ENCODE measurements at regions of chr2 and their contacts with region 1.

Region 1: DNA sequence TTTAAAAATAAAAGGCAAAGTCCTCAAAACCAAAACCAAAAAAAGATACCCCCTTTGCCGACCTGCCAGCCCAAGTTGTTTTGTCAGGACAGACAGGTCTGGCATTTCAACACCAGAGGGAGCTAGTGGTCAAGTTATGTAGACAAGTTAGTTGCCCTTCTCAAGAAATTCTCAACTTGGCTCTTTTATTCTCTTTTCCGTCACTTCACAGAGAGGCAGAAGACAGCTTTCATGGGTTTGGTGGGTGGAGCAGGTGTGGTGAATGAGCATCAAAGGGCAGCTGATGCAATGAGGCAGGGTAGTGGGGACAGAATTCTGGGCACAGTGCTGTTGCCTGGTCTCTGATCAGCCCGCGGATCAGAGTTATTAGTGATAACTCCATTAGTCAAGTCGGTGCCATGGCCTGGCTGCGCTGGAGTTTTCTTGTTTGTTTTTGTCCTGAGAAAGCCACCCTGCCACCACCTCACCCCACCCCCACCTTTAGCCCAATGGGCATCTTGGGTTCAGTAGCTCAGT is 303.7 kb upstream of the EPAS1 start:
- DNase-seq: peak; percentile 69
- CTCF ChIP-seq: peak; percentile 71

Region 2: DNA sequence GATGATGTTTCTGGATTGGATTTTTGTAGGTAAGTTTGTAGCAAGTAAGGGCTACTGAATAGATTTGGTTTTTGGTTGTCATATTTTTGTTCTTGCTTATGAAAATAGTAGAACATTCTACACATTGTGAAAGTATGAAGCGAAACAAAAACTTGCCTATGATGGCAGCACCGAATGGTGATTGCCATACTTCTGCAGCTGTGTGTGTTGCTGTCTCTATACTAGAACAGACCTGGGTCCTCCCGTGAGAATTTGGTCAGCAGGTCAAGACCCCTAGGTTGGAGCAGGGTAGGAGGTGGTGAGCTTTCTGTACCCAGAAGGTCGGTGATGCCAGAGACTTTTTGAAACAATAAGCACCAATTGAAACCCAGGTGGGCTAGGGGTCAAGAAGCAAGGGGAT is 19.5 kb before region 1 on chr2:
- CTCF ChIA-PET with region 1: interaction called, 27 read pairs
- POLR2A ChIA-PET with region 1: no interaction called
- DNase-seq: peak; percentile 56
- CTCF ChIP-seq: no peak

Region 3: GRCh38 chr2:45980161-45980852 is 13.2 kb before region 1 on chr2:
- CTCF ChIA-PET with region 1: interaction called, 27 read pairs
- POLR2A ChIA-PET with region 1: no interaction called
- DNase-seq: no peak
- CTCF ChIP-seq: no peak

Region 4: DNA sequence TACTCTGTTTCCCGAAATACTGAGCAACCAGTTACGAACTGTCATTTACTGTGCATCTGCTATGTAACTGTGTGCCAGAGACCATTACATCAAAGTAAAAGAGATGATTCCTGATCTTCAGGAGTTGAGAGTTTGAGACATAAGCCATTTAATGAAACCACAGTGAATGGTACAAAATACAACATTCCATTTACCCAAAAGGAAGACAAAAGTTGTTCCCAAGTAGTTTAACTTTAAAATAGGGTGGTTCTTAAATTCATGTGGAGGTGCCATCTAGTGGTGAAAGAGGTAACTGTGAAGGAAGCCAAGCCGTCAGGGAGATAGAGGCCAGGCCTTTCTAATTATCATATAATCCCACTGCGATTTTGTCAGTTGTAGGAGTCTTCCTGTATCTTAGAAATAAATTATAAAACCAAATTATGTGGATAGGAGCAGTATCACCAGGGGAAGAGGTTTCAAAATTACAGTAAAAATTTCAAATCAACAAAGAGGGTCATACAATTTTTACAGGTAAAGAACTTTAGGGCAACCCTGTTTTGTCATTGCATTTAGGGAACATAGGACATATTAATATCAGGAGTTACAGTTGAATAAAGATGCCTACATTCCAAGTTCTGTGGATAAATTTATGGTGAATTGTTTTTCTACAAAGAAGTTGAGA is 371.4 kb after region 1 on chr2:
- CTCF ChIA-PET with region 1: interaction called, 15 read pairs
- POLR2A ChIA-PET with region 1: no interaction called
- DNase-seq: peak; percentile 70
- CTCF ChIP-seq: peak; percentile 70

Region 5: GRCh38 chr2:46461011-46461674 is 467.6 kb after region 1 on chr2:
- CTCF ChIA-PET with region 1: interaction called, 17 read pairs
- POLR2A ChIA-PET with region 1: no interaction called
- DNase-seq: peak; percentile 71
- CTCF ChIP-seq: peak; percentile 97

Region 6: DNA sequence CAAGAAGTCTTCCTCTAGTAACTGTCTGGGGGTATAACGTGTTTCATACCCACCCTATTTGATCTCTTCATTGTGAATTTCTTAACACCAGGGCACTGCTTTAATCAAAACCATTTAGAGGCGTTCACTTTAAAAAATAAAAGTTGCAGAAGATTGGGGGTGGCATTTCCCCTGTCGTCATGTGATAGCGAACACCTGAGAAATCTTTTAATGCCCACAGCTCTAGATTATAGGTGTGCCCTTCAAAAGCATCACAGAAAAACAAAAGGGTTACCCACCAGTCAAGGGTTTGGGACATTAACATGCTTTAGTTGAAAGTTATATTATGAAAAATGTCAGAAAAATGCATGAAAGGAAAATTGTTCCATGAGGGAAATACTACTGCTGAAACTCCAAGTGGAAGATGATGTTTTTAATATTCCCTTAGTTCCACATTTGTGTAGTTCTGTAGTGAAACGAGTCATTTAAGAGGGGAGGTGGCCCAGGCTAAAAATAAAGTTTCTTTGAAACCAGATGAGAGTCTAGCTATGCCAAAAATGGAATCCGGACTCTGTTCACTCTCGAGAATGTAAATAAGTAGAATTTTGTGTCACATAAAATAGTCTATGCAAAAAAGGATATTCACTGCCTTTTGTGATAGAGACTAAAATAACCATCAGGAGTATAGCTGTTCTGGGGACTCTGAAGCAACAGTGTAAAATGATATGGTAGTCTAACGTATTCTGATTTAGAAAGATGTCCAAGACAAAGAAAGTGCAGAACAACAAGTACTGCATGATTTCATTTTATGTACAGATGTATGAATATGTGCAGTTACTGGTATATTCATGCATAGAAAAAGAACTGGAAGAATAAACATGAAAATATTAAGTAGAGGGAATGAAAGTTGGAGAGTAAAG is 581.2 kb after region 1 on chr2:
- CTCF ChIA-PET with region 1: no interaction called
- POLR2A ChIA-PET with region 1: no interaction called
- DNase-seq: peak; percentile 24
- CTCF ChIP-seq: no peak

Region 7: DNA sequence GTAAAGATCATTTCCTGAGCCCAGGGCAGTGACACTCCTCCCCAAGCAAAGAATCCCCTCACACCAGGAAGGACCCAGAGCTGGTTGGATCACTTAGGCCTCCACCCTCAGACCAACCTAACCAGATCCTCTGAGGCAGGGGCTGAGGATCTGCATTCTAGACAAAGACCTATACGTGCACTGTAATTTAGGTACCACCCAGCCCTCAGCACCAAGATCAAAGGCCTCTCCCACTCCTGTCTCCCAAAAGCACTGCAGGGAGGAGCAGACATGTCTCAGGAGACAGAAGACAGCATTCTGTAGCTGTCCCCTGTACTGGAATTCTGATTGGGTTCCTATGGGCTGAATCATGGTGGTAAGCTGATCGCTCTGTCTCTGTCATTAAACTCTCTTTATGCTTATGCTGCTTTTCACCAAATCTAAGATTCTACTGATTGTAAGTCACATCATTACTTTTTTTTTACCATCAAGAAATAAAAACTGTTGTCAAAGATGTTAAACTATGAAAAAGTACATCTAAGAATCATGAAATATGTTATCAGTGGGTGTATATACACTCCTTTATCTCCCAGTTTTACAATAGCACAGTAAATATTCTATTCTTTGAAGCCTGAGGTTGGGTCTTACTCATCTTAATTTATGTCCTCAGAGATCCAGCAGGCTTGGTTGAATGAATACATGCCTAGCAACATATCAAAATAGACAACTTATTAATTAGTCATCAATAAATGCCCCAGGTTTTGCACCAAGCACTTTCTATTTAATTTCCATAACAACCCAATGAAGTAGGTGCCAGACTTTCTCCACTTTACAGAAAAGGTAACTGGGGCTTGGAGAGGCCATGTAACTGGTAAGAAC is 893.7 kb after region 1 on chr2:
- CTCF ChIA-PET with region 1: no interaction called
- POLR2A ChIA-PET with region 1: no interaction called
- DNase-seq: no peak
- CTCF ChIP-seq: no peak

Measured in GM10248 (cell line).